A673 (cell line): ENCODE measurements at regions of chr22 and their contacts with region 1.

Region 1: GRCh38 chr22:17213976-17214375 is 5.3 kb downstream of the ADA2 start:
- DNase-seq: peak; percentile 57
- H3K4me3 ChIP-seq: no peak overlapping the region
- H3K27ac ChIP-seq: no peak overlapping the region
- H3K4me1 ChIP-seq: peaks cover 18% of the 10 kb centered on the region
- H3K27me3 ChIP-seq: no peaks in the 10 kb centered on the region
- CTCF ChIP-seq: peak; percentile 59

Region 2: DNA sequence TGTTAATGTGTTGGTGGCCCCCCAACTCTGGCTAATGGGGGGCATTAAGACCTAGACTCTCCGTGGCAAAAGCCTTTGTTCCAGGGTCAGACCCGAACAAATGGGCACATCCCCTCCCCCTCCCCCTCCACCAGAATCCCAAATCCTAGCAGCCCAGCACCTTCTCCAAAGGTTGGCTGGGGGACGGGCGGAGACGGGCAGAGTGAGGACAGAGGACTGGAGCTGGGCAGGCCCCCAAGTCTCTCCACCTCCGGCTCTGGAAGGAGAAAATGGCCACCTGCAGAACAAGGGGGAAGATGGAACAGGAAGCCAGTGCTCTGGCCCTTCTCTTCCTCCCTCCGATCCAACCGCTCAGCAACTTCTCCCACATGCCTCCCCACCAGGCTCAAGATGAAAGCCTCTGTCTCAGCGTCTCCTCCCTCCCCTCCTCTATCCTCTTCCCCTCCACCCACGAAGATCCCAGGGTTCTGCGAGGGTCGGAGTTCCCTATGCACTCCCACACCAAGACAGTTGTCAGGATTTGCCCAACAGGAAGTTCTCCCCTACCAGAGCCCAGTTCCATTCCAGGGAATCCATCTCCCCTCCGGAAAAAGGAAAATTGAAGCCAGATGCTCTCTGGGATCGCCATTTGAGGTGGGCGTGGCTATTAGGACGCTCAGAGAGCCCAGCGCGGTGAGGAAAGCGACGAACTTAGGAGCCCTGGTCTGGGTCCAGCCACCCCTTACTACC is 14.8 kb before region 1 on chr22:
- CTCF ChIA-PET with region 1: no interaction called
- POLR2A ChIA-PET with region 1: interaction called, 11 read pairs
- intact Hi-C with region 1: no loop called
- DNase-seq: peak; percentile 25
- H3K4me3 ChIP-seq: no peak overlapping the region
- H3K27ac ChIP-seq: no peak overlapping the region
- H3K4me1 ChIP-seq: no peaks in the 10 kb centered on the region
- H3K27me3 ChIP-seq: no peaks in the 10 kb centered on the region
- CTCF ChIP-seq: no peak

Region 3: DNA sequence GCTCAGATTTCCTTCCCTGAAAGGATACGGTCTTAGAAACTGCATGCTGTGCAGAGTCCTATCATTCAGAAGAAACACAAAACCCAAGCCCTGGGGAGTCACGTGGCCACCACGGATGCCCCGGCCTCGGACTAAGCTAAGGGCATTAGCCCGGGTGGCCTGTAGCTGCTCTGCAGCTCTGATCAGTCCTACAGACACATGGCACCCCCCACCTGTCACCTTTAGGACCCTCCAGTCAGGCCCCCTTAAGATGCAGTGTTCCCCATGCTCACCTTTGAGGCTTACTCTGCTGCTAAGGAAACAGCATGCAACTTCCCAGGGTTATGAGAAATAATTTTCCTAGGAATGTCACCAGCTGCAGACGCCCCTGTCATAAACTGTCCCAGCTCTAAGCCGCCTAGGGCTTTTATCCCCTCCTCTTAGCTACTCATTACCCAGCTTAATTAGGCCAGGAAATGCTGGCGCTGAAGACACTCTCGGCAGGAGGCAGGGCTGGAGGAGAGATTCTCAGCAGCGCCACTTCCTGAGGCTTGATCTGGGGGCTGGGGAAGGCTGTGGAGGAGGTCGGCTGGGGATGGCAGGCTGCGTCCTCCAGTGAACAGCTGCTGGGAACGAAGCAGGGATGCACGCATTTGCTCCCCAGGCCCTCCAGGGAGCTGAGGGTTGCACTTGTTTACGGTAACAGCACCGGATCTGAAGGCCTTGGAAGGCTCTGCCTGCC is 52.4 kb after region 1 on chr22:
- CTCF ChIA-PET with region 1: no interaction called
- POLR2A ChIA-PET with region 1: no interaction called
- intact Hi-C with region 1: loop called (anchors 5 kb)
- DNase-seq: peak; percentile 98
- H3K4me3 ChIP-seq: peak overlapping the region; percentile 10
- H3K27ac ChIP-seq: peak overlapping the region; percentile 94
- H3K4me1 ChIP-seq: peaks cover 63% of the 10 kb centered on the region
- H3K27me3 ChIP-seq: no peaks in the 10 kb centered on the region
- CTCF ChIP-seq: 0 out of 2 replicates have a peak, but pooled peaks have one; percentile 13

Region 4: GRCh38 chr22:17368554-17369438 is 154.8 kb after region 1 on chr22:
- CTCF ChIA-PET with region 1: interaction called, 3 read pairs
- POLR2A ChIA-PET with region 1: no interaction called
- intact Hi-C with region 1: loop called (anchors 5 kb)
- DNase-seq: peak; percentile 56
- H3K4me3 ChIP-seq: peak overlapping the region; percentile 50
- H3K27ac ChIP-seq: peak overlapping the region; percentile 41
- H3K4me1 ChIP-seq: peaks cover 7% of the 10 kb centered on the region
- H3K27me3 ChIP-seq: peaks cover 43% of the 10 kb centered on the region
- CTCF ChIP-seq: no peak